CD4-positive, alpha-beta T cell (primary cell): ENCODE measurements at regions of chr16 and their contacts with region 1.

Region 1: GRCh38 chr16:87976665-87977064 is 25.4 kb downstream of the BANP start:
- DNase-seq: no peak
- ATAC-seq: no peak
- H3K4me3 ChIP-seq: no peak overlapping the region
- H3K4me3 Mint-ChIP-seq: no peak overlapping the region
- H3K27ac ChIP-seq: no peak overlapping the region
- H3K27ac Mint-ChIP-seq: no peak overlapping the region
- H3K4me1 ChIP-seq: peaks cover 12% of the 10 kb centered on the region
- H3K4me1 Mint-ChIP-seq: peaks cover 39% of the 10 kb centered on the region
- H3K27me3 ChIP-seq: no peaks in the 10 kb centered on the region
- H3K27me3 Mint-ChIP-seq: no peaks in the 10 kb centered on the region
- CTCF ChIP-seq: no peak

Region 2: GRCh38 chr16:87963400-87963799 is 13.3 kb before region 1 on chr16:
- CTCF ChIA-PET with region 1: no interaction called
- POLR2A ChIA-PET with region 1: no interaction called
- intact Hi-C with region 1: loop called in 1 of 2 experiments (anchors 2 kb)
- DNase-seq: peak in 12 of 14 experiments; percentile 23 to 76 (median 52)
- ATAC-seq: peak; percentile 90
- H3K4me3 ChIP-seq: no peak overlapping the region
- H3K4me3 Mint-ChIP-seq: peak overlapping the region; percentile 59
- H3K27ac ChIP-seq: peak overlapping the region in 1 of 2 donors; percentile 40
- H3K27ac Mint-ChIP-seq: peak overlapping the region; percentile 83
- H3K4me1 ChIP-seq: peaks cover 55% of the 10 kb centered on the region
- H3K4me1 Mint-ChIP-seq: peaks cover 79% of the 10 kb centered on the region
- H3K27me3 ChIP-seq: no peaks in the 10 kb centered on the region
- H3K27me3 Mint-ChIP-seq: no peaks in the 10 kb centered on the region
- CTCF ChIP-seq: no peak

Region 3: GRCh38 chr16:88650749-88651275 is 674.1 kb after region 1 on chr16 and contains the start of gene CYBA:
- CTCF ChIA-PET with region 1: no interaction called
- POLR2A ChIA-PET with region 1: no interaction called
- intact Hi-C with region 1: no loop called
- DNase-seq: peak; percentile 64 to 91 (median 76)
- ATAC-seq: peak; percentile 76
- H3K4me3 ChIP-seq: peak within 1 kb of the TSS; percentile 96
- H3K4me3 Mint-ChIP-seq: peak within 1 kb of the TSS; percentile 93
- H3K27ac ChIP-seq: peak within 1 kb of the TSS; percentile 81 to 94
- H3K27ac Mint-ChIP-seq: peak within 1 kb of the TSS; percentile 95
- H3K4me1 ChIP-seq: peaks cover 56% of the 10 kb centered on the region
- H3K4me1 Mint-ChIP-seq: peaks cover 14% of the 10 kb centered on the region
- H3K27me3 ChIP-seq: no peaks in the 10 kb centered on the region
- H3K27me3 Mint-ChIP-seq: no peaks in the 10 kb centered on the region
- CTCF ChIP-seq: no peak
- total RNA-seq, gene CYBA: 292 to 294 TPM